Left ventricle myocardium superior (tissue), 1 donor: ENCODE measurements at regions of chr1 and their contacts with region 1.

Region 1: GRCh38 chr1:176374967-176375569 is 87.9 kb upstream of the PAPPA2 start:
- DNase-seq: peak; percentile 77
- ATAC-seq: peak; percentile 73

Region 2: GRCh38 chr1:176843352-176844297 is 468.6 kb after region 1 on chr1:
- intact Hi-C with region 1: loop called (anchors 10 kb)
- DNase-seq: peak; percentile 39
- ATAC-seq: peak; percentile 55

Region 3: DNA sequence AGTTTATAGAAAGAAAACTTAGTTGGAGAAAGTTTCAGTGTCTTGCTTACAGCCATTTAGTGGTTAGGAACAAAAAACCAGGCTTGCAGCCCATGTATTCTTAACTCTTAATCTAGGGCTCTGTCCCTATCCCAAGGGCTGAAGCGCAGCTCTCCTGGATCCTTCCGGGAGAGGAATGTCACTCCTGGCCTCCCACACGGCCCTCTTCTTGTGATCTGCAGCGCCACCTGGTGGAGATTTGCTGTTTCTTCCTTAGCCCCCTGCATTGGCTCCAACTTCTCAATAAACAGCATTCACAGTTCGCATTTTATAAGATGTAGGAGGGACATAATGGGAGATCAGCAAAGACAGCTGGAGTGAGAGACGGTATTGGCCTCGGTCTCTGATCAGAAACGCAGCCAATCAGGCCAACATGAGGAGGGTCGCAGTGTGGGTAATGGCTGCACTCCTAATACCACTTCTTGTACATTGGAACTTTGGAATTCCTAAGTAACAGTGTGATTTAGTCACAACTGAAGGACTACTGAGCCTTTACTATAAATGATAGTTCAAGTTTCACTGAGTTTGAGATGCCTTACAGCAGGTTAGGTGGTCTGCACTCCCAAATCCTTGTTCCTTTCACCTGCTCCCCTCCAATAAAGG is 506.0 kb after region 1 on chr1:
- intact Hi-C with region 1: loop called (anchors 5 kb)
- DNase-seq: peak; percentile 74
- ATAC-seq: peak; percentile 91

Region 4: GRCh38 chr1:177274687-177275211 is 899.7 kb after region 1 on chr1:
- intact Hi-C with region 1: no loop called
- DNase-seq: peak; percentile 52
- ATAC-seq: peak; percentile 97